ENCODE measurements at regions of chr1 and their contacts with region 1.

Region 1: DNA sequence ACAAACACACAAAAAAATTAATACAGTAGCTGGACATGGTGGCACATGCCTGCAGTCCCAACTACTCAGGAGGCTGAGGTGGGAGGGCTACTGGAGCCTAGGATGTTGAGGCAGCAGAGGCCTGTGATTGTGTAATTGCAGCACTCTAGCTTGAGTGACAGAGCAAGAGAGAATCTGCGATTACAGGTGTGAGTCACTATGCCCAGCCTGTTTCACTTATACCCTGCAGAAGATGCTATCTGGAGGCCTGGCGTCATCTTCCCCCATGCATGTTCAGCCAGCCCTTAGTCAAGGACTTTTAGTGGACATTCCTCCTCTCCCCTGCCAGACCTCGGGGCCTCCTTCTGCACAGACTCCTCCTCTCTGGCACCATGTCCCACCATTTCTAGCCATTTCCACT is 36.3 kb upstream of the RCC2 start:
- DNase-seq: no peak
- ATAC-seq: no peak
- H3K4me3 Mint-ChIP-seq: no peak overlapping the region
- H3K27ac Mint-ChIP-seq: no peak overlapping the region
- H3K4me1 Mint-ChIP-seq: peaks cover 47% of the 10 kb centered on the region
- H3K27me3 Mint-ChIP-seq: no peaks in the 10 kb centered on the region
- CTCF ChIP-seq: no peak

Region 2: GRCh38 chr1:17403104-17403503 is 72.6 kb before region 1 on chr1:
- CTCF ChIA-PET with region 1: interaction called, 10 read pairs
- POLR2A ChIA-PET with region 1: no interaction called
- DNase-seq: no peak
- ATAC-seq: no peak
- H3K4me3 Mint-ChIP-seq: no peak overlapping the region
- H3K27ac Mint-ChIP-seq: no peak overlapping the region
- H3K4me1 Mint-ChIP-seq: peaks cover 35% of the 10 kb centered on the region
- H3K27me3 Mint-ChIP-seq: no peaks in the 10 kb centered on the region
- CTCF ChIP-seq: no peak

Region 3: DNA sequence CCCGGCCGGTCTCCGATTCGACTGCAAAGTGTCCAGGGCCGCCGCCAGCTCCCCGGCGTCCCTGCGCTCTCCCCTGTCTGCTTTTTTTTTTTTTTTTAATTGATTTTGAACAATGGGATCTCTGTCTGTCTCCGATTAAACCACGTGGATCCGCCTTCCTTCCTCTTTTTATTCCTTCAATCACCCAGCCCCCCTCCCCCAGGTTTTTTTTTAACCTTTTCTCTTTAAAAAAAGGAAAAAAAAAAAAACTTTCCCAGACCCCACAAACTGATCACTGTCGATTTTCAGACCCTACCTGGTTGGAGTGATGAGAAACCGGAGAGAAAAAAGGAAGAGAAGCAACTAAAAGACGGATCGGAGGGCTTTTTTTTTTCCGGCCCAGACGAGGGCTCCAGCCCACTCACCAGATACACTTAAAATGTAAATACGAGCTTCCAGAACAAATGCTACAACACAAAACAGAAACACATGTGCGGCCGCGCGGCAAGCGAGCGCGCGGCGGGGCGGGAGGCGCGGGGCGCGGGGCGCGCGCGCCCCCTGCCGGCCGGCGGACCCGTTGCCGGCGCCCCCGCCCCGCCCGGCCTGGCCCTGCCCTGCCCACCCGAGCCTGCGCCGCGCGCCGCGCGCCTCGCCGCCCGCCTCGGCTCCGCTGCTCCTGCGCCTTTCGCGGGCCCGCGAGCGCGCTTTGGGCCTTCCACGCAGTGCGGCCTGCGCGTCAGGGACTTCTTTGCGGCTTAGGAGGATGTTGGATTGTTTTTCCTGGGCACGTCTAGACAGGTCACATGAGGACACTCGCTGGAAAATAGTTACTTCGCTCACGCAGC is 36.3 kb before region 1 on chr1 and contains the start of gene RCC2:
- CTCF ChIA-PET with region 1: interaction called, 11 read pairs
- POLR2A ChIA-PET with region 1: interaction called, 6 read pairs
- DNase-seq: peak; percentile 48
- ATAC-seq: peak; percentile 21
- H3K4me3 Mint-ChIP-seq: peak within 1 kb of the TSS; percentile 98
- H3K27ac Mint-ChIP-seq: peak within 1 kb of the TSS; percentile 97
- H3K4me1 Mint-ChIP-seq: peaks cover 57% of the 10 kb centered on the region
- H3K27me3 Mint-ChIP-seq: peaks cover 10% of the 10 kb centered on the region
- CTCF ChIP-seq: no peak
- total RNA-seq, gene RCC2: 377 to 407 TPM (median 395 TPM) in 3 replicates

Region 4: DNA sequence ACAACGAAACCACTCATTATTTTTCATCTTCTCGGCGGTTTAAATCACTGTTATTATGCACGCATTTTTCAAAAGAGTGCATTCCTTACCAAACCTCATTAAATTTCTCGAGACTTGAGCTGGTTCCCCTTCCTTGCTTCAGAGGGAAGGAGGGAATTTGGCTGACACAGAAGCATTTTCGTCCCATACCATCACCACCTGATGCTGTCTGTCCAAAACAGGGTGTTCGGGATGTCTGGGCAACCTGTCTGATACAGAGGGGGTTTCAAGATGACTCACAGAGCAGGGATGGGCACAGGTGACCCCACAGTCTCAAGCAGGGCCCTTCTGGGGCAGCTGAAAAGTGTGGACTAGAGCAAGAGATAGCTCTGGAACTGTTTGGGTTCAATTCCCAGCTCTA is 24.0 kb before region 1 on chr1:
- CTCF ChIA-PET with region 1: interaction called, 26 read pairs
- POLR2A ChIA-PET with region 1: no interaction called
- DNase-seq: no peak
- ATAC-seq: no peak
- H3K4me3 Mint-ChIP-seq: no peak overlapping the region
- H3K27ac Mint-ChIP-seq: peak overlapping the region; percentile 63; the same call in 1 of the 2 replicates
- H3K4me1 Mint-ChIP-seq: peaks cover 4% of the 10 kb centered on the region; the same call in 1 of the 2 replicates
- H3K27me3 Mint-ChIP-seq: no peaks in the 10 kb centered on the region; the same call in 1 of the 2 replicates
- CTCF ChIP-seq: no peak

Region 5: DNA sequence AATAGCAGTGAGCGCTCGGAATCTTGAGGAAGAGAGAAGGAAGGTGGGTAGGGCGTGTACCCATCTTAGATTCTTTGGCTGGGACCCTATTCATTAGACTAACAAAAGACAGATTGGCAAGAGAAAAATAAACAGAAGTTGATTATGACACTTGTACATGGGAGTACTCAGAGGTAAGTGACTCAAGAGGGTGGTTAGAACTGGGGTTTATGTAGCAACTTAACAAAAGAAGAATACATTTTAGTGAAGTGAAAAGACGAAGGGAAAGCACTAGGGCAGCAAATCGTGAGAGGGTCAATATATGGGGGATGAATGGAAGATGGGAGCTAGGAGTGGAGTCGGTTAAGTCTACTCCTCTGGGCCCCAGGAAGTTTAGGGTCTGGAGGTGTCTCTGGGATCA is 10.5 kb before region 1 on chr1:
- CTCF ChIA-PET with region 1: interaction called, 32 read pairs
- POLR2A ChIA-PET with region 1: no interaction called
- DNase-seq: no peak
- ATAC-seq: no peak
- H3K4me3 Mint-ChIP-seq: no peak overlapping the region
- H3K27ac Mint-ChIP-seq: no peak overlapping the region
- H3K4me1 Mint-ChIP-seq: peaks cover 42% of the 10 kb centered on the region
- H3K27me3 Mint-ChIP-seq: peaks cover 30% of the 10 kb centered on the region
- CTCF ChIP-seq: no peak